Caco-2 (cell line): ENCODE measurements at regions of chr6 and their contacts with region 1.

Region 1: DNA sequence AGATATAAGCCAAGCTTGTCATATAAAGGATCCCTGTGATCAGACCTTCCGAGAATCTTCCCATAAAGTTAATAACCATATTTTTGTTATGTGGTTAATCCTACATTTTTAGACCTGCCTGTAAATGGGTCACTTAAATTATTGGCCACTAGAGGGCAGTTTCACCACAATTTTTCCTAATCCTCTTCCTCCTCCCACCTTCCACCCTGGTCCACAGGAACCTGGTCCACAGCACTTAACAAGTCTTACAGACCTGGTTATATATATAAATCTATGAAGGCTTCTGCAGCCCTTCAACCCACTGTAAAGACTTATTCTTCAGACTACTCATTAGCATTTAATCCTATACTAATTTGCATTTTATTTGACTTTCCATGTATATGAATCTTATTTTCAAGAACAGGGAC is 28.3 kb downstream of the MRS2 start:
- DNase-seq: peak in 1 of 2 experiments; percentile 59
- H3K4me3 ChIP-seq: no peak overlapping the region
- H3K4me3 Mint-ChIP-seq: no peak overlapping the region
- H3K27ac Mint-ChIP-seq: no peak overlapping the region
- H3K4me1 ChIP-seq: no peaks in the 10 kb centered on the region
- H3K4me1 Mint-ChIP-seq: peaks cover 16% of the 10 kb centered on the region
- H3K27me3 ChIP-seq: no peaks in the 10 kb centered on the region
- H3K27me3 Mint-ChIP-seq: no peaks in the 10 kb centered on the region
- CTCF ChIP-seq: peak; percentile 43 to 60

Region 2: DNA sequence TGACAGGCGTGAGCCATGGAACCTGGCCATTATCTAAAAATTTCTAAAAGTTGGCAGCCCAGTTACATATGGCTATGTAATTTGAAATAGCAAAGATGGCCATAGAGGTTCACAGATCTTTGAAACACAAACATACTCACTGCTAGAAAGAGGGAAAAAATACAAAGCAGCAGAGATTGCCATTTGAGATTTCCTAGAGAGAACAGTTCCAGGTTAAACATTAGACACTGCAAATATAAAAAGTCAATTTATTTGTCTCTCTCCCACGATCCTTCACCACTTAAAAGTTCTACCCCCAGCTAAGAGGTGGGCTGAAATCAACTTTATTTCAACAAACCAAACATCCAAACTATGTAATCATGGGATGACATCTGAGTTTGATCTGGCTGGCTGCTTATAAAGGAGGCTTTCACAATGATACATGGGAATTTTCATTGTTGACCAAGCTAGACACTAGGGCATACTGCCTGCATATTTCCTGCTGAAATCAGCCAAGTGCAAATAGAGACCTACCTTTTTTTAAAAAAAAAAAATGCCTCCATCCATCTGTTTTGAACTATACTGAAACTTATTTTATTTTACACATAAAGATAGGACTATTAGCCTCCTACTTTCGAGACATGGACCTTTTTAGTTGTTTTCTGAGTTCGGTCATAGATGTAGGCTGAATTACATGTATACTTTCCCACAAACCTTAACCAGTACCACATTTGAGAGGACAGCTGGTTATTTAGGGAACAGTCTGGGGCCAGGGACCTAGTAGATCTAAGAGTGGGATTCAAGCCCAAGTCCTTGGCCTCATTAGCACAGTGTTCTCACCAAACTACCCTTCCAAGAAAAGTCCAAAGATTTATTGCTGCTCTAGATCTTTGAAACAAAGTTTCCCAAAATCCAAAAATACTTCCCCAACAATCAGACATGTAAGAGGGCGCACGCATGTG is 89.8 kb before region 1 on chr6:
- CTCF ChIA-PET with region 1: no interaction called
- POLR2A ChIA-PET with region 1: no interaction called
- intact Hi-C with region 1: no loop called
- DNase-seq: peak; percentile 52 to 72
- H3K4me3 ChIP-seq: no peak overlapping the region
- H3K4me3 Mint-ChIP-seq: peak overlapping the region; percentile 55
- H3K27ac Mint-ChIP-seq: peak overlapping the region; percentile 92
- H3K4me1 ChIP-seq: peaks cover 46% of the 10 kb centered on the region
- H3K4me1 Mint-ChIP-seq: peaks cover 66% of the 10 kb centered on the region
- H3K27me3 ChIP-seq: no peaks in the 10 kb centered on the region
- H3K27me3 Mint-ChIP-seq: no peaks in the 10 kb centered on the region
- CTCF ChIP-seq: no peak

Region 3: DNA sequence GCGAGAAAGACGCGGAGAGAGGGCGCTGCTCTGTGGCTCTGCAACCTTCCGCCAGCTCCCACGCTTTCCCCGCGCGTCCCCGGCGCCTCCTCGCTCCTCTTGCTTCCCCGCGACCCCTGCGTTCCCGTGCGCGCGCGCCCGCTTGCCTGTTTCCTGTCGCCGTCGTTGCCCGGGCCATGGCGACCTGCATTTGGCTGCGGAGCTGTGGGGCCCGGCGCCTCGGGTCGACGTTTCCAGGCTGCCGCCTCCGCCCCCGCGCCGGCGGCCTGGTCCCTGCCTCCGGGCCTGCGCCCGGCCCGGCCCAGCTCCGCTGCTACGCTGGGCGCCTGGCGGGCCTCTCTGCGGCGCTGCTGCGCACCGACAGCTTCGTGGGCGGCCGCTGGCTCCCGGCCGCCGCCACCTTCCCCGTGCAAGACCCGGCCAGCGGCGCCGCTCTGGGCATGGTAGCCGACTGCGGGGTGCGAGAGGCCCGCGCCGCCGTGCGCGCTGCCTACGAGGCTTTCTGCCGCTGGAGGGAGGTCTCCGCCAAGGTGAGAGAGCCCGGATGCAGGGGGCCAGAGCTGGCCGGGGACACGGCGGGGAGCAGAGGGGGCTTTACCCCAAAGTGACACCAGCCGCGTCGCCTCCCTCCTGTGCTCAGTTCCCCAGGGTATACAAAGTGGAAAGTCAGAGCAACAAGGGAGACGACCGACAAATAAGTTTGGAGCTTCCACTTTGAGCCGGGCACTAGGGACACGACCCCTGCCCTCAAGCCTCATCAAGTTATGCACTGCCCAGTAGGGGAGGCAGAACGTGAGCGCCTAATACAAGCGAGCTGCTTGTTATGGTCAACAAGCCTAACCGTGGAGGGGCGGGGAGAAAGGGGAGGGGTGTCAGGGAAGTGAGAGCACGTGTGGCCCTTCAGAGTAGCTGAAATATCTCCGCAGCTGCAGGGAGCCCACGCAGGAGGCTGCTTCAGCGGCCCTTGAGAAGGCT is 64.1 kb after region 1 on chr6 and contains the start of gene ALDH5A1:
- CTCF ChIA-PET with region 1: no interaction called
- POLR2A ChIA-PET with region 1: no interaction called
- intact Hi-C with region 1: loop called (anchors 5 kb)
- DNase-seq: peak; percentile 82 to 83
- H3K4me3 ChIP-seq: peak within 1 kb of the TSS; percentile 62
- H3K4me3 Mint-ChIP-seq: peak within 1 kb of the TSS; percentile 76
- H3K27ac Mint-ChIP-seq: peak within 1 kb of the TSS; percentile 77
- H3K4me1 ChIP-seq: no peaks in the 10 kb centered on the region; the same call in 1 of the 2 replicates
- H3K4me1 Mint-ChIP-seq: peaks cover 13% of the 10 kb centered on the region
- H3K27me3 ChIP-seq: no peaks in the 10 kb centered on the region
- H3K27me3 Mint-ChIP-seq: no peaks in the 10 kb centered on the region
- CTCF ChIP-seq: peak; percentile 27 to 59
- total RNA-seq, gene ALDH5A1: 42.4 and 45.3 TPM in 2 replicates

Region 4: DNA sequence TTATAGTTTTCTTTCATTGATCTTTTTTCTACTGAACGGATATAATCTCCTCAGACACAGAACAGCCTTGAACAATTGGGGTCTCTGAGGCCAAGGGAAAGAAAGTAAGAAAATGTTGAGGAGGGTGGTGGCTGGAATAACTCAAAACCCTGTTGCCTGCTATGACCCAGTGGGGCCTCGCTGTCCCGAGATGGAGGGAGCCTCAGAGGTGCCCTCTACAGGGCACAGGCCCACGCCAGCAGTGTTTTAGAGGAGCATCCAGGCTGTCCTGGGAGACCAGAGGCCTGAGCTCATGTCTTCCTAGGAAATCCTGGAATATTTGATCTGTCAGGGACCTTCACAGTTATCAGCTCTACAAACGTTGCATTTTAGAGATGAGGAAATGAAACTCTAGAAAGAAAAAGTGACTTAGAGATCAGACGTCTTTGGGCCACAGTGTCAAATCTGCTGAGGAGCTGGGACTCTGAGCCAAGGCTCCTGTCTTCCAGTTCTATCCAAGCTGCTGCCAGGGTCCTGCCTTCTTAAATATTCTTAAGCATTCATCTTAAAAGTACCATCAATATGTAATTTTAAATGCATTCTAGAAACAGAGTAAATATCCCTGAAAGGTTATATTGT is 90.0 kb after region 1 on chr6:
- CTCF ChIA-PET with region 1: interaction called, 4 read pairs
- POLR2A ChIA-PET with region 1: no interaction called
- intact Hi-C with region 1: loop called (anchors 1 kb)
- DNase-seq: peak; percentile 70 to 79
- H3K4me3 ChIP-seq: no peak overlapping the region
- H3K4me3 Mint-ChIP-seq: no peak overlapping the region
- H3K27ac Mint-ChIP-seq: no peak overlapping the region
- H3K4me1 ChIP-seq: no peaks in the 10 kb centered on the region
- H3K4me1 Mint-ChIP-seq: peaks cover 12% of the 10 kb centered on the region
- H3K27me3 ChIP-seq: no peaks in the 10 kb centered on the region
- H3K27me3 Mint-ChIP-seq: no peaks in the 10 kb centered on the region
- CTCF ChIP-seq: peak; percentile 76 to 93

Region 5: GRCh38 chr6:24564090-24564489 is 133.0 kb after region 1 on chr6:
- CTCF ChIA-PET with region 1: no interaction called
- POLR2A ChIA-PET with region 1: no interaction called
- intact Hi-C with region 1: loop called (anchors 1 kb)
- DNase-seq: peak in 1 of 2 experiments; percentile 32
- H3K4me3 ChIP-seq: no peak overlapping the region
- H3K4me3 Mint-ChIP-seq: no peak overlapping the region
- H3K27ac Mint-ChIP-seq: no peak overlapping the region
- H3K4me1 ChIP-seq: no peaks in the 10 kb centered on the region
- H3K4me1 Mint-ChIP-seq: no peaks in the 10 kb centered on the region
- H3K27me3 ChIP-seq: no peaks in the 10 kb centered on the region
- H3K27me3 Mint-ChIP-seq: peaks cover 7% of the 10 kb centered on the region
- CTCF ChIP-seq: no peak

Region 6: GRCh38 chr6:24699521-24700359 is 268.7 kb after region 1 on chr6:
- CTCF ChIA-PET with region 1: no interaction called
- POLR2A ChIA-PET with region 1: no interaction called
- intact Hi-C with region 1: loop called (anchors 5 kb)
- DNase-seq: no peak
- H3K4me3 ChIP-seq: no peak overlapping the region
- H3K4me3 Mint-ChIP-seq: no peak overlapping the region
- H3K27ac Mint-ChIP-seq: no peak overlapping the region
- H3K4me1 ChIP-seq: no peaks in the 10 kb centered on the region
- H3K4me1 Mint-ChIP-seq: no peaks in the 10 kb centered on the region
- H3K27me3 ChIP-seq: no peaks in the 10 kb centered on the region
- H3K27me3 Mint-ChIP-seq: no peaks in the 10 kb centered on the region
- CTCF ChIP-seq: no peak